Dendritic cell treated with granulocyte-macrophage colony-stimulating factor and Interleukin-4, amounts not matched to agents 40 ng/mL and 50 ng/mL, for 4 days (primary cell): ENCODE measurements at regions of chr4 and their contacts with region 1.

Region 1: GRCh38 chr4:138279286-138279685 is 37.1 kb upstream of the SLC7A11 start:
- H3K4me3 Mint-ChIP-seq: no peak overlapping the region
- H3K27ac Mint-ChIP-seq: no peak overlapping the region
- H3K4me1 Mint-ChIP-seq: no peaks in the 10 kb centered on the region
- H3K27me3 Mint-ChIP-seq: no peaks in the 10 kb centered on the region

Region 2: DNA sequence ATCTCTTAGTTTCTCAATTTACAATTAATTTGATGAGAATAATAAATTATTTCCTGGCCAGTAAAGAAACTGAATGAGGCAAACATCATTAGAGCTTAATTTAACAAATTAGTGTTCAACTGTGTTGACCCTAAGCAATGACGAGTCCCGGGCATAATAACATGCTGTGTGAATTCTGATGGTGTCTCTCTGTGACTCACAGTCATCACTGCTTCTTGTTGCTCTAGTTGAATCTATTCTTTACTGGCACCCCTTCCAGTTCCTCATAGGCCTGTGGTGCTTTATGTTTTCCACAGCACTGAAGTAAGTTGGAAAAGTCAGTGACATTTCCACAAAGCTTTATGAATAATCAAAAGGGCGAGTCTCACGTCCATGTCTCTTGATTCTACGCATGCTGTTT is 20.6 kb after region 1 on chr4:
- intact Hi-C with region 1: loop called (anchors 1 kb)
- H3K4me3 Mint-ChIP-seq: no peak overlapping the region
- H3K27ac Mint-ChIP-seq: peak overlapping the region; percentile 77
- H3K4me1 Mint-ChIP-seq: peaks cover 25% of the 10 kb centered on the region
- H3K27me3 Mint-ChIP-seq: no peaks in the 10 kb centered on the region

Region 3: GRCh38 chr4:138761638-138762220 is 482.4 kb after region 1 on chr4:
- intact Hi-C with region 1: no loop called
- H3K4me3 Mint-ChIP-seq: no peak overlapping the region
- H3K27ac Mint-ChIP-seq: no peak overlapping the region
- H3K4me1 Mint-ChIP-seq: no peaks in the 10 kb centered on the region
- H3K27me3 Mint-ChIP-seq: peaks cover 3% of the 10 kb centered on the region